AG04450 (cell line): ENCODE measurements at regions of chr3 and their contacts with region 1.

Region 1: DNA sequence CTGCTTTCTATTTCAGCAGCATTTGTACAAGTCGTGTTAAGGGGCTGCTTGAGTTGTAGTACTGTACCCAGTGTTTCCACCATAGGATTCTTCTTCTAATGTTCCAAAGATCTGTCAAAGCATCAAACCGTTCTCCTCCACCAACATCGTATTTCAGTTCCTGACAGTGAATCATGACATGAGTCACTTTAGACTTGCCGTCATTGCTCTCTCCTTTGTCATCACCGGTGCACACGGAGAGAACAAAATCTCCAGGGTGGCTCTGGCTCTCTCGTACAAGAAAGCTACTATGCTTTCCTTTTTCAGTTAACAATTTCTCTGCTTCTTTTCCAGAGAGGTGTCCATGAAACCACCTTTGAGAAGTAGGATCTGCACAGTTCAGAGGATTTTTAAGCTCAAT is 270.9 kb upstream of the CCDC54 start:
- DNase-seq: no peak
- H3K4me3 ChIP-seq: no peak overlapping the region
- H3K27ac ChIP-seq: no peak overlapping the region
- H3K27me3 ChIP-seq: no peaks in the 10 kb centered on the region
- CTCF ChIP-seq: no peak

Region 2: DNA sequence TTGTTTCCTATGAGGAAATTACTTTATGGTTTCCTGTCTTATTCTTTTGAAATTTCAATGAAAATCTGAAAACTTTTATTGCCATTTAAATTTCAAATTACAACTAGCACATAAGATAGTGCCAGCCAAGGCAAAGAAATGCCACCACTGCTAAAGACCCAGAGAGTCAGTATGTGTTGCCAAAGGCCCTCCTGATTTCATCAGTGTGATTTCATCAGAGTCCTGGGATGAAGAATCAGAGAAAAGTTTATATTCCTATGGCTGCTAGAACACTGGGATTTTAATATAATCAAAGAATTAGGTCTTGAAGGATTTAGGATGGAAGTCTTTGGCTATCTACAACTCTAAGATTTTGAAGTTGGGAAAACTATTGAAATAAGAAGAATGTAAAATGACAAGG is 163.2 kb before region 1 on chr3:
- CTCF ChIA-PET with region 1: no interaction called
- POLR2A ChIA-PET with region 1: no interaction called
- DNase-seq: no peak
- H3K4me3 ChIP-seq: no peak overlapping the region
- H3K27ac ChIP-seq: no peak overlapping the region
- H3K27me3 ChIP-seq: no peaks in the 10 kb centered on the region
- CTCF ChIP-seq: no peak

Region 3: GRCh38 chr3:107045791-107046190 is 60.5 kb before region 1 on chr3:
- CTCF ChIA-PET with region 1: no interaction called
- POLR2A ChIA-PET with region 1: no interaction called
- DNase-seq: no peak
- H3K4me3 ChIP-seq: no peak overlapping the region
- H3K27ac ChIP-seq: no peak overlapping the region
- H3K27me3 ChIP-seq: no peaks in the 10 kb centered on the region
- CTCF ChIP-seq: no peak

Region 4: DNA sequence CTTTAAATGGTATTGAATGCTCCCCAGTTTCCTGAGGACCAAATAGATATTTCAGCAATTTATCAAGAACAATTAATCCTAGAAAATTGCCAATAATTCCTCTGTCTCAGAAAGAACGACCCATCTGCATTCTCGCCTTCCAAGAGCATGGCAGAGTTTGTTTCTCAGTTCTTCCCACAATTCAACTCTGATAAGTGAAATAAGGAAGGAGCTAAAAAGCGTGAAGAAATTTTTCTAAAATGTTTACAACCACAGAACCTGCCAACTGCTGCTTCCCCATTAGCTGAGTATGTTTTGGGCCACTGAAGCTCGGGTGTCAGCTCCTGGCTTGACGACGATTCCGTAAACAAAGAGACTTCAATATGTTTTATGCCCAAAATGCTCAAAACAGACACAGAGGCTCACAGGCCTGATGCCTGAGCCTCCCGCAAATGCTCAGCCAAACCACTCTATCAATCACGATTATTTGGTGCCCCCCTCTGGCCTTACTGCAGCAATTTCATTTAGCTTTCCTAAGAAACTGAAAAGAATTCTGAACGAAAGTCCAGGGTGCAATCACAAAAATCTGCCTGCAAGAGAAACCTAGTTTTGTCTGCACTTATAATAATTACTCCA is 11.7 kb after region 1 on chr3:
- CTCF ChIA-PET with region 1: interaction called, 24 read pairs
- POLR2A ChIA-PET with region 1: no interaction called
- DNase-seq: peak; percentile 43
- H3K4me3 ChIP-seq: no peak overlapping the region
- H3K27ac ChIP-seq: no peak overlapping the region
- H3K27me3 ChIP-seq: no peaks in the 10 kb centered on the region
- CTCF ChIP-seq: peak; percentile 64